Adrenal gland (tissue), 19 donors: ENCODE measurements at regions of chr1 and their contacts with region 1.

Region 1: GRCh38 chr1:178023181-178023618 is 53.3 kb upstream of the SEC16B start:
- DNase-seq: no peak
- H3K4me3 ChIP-seq: no peak overlapping the region
- H3K27ac ChIP-seq: no peak overlapping the region
- H3K4me1 ChIP-seq: no peaks in the 10 kb centered on the region
- H3K27me3 ChIP-seq: no peaks in the 10 kb centered on the region
- CTCF ChIP-seq: no peak
- POLR2A ChIP-seq: no peak

Region 2: GRCh38 chr1:177975588-177976495 is 47.4 kb before region 1 on chr1:
- intact Hi-C with region 1: loop called in 1 of 2 experiments (anchors 10 kb)
- DNase-seq: no peak
- H3K4me3 ChIP-seq: no peak overlapping the region
- H3K27ac ChIP-seq: no peak overlapping the region
- H3K4me1 ChIP-seq: no peaks in the 10 kb centered on the region
- H3K27me3 ChIP-seq: no peaks in the 10 kb centered on the region
- CTCF ChIP-seq: no peak
- POLR2A ChIP-seq: no peak

Region 3: GRCh38 chr1:178155481-178156255 is 132.5 kb after region 1 on chr1:
- intact Hi-C with region 1: no loop called
- DNase-seq: no peak
- H3K4me3 ChIP-seq: no peak overlapping the region
- H3K27ac ChIP-seq: no peak overlapping the region
- H3K4me1 ChIP-seq: no peaks in the 10 kb centered on the region
- H3K27me3 ChIP-seq: no peaks in the 10 kb centered on the region
- CTCF ChIP-seq: no peak
- POLR2A ChIP-seq: no peak